Activated B cell treated with CpG ODN at 0.5 μM for 24 hours (primary cell): ENCODE measurements at regions of chr3 and their contacts with region 1.

Region 1: GRCh38 chr3:67463656-67464055 is 190.8 kb downstream of the SUCLG2 start:
- DNase-seq: no peak
- ATAC-seq: no peak
- H3K4me3 Mint-ChIP-seq: no peak overlapping the region
- H3K27ac Mint-ChIP-seq: no peak overlapping the region
- H3K4me1 Mint-ChIP-seq: no peaks in the 10 kb centered on the region
- H3K27me3 Mint-ChIP-seq: no peaks in the 10 kb centered on the region
- CTCF ChIP-seq: no peak

Region 2: GRCh38 chr3:67447393-67447792 is 16.3 kb before region 1 on chr3:
- CTCF ChIA-PET with region 1: no interaction called
- POLR2A ChIA-PET with region 1: no interaction called
- intact Hi-C with region 1: no loop called
- DNase-seq: no peak
- ATAC-seq: no peak
- H3K4me3 Mint-ChIP-seq: no peak overlapping the region
- H3K27ac Mint-ChIP-seq: no peak overlapping the region
- H3K4me1 Mint-ChIP-seq: peaks cover 2% of the 10 kb centered on the region
- H3K27me3 Mint-ChIP-seq: no peaks in the 10 kb centered on the region
- CTCF ChIP-seq: no peak

Region 3: DNA sequence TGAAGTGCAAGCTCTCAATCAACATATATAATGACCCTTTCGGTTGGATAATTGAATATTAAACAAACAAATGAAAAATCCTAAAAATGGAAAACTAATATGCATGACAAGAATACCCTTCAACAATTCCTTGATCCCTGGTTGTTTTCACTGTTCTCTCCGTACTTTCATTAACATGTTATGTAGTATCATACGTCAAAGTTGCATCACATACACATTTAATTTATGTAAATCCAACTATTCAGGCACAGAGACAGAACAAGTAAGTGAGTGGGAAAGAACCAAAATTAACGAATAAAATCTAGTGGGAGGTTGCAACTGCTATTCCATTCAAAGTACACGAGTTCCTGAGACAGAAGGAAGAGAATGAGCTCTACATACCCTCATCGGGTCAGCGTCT is 14.8 kb after region 1 on chr3:
- CTCF ChIA-PET with region 1: no interaction called
- POLR2A ChIA-PET with region 1: no interaction called
- intact Hi-C with region 1: loop called (anchors 2 kb)
- DNase-seq: no peak
- ATAC-seq: no peak
- H3K4me3 Mint-ChIP-seq: no peak overlapping the region
- H3K27ac Mint-ChIP-seq: no peak overlapping the region
- H3K4me1 Mint-ChIP-seq: no peaks in the 10 kb centered on the region
- H3K27me3 Mint-ChIP-seq: no peaks in the 10 kb centered on the region
- CTCF ChIP-seq: no peak